ENCODE measurements at regions of chr2 and their contacts with region 1.

Region 1: GRCh38 chr2:25151718-25152117 is 16.7 kb downstream of the POMC start:
- DNase-seq: no peak
- H3K4me3 ChIP-seq: no peak overlapping the region
- H3K27ac ChIP-seq: no peak overlapping the region
- H3K4me1 ChIP-seq: no peaks in the 10 kb centered on the region
- H3K27me3 ChIP-seq: no peaks in the 10 kb centered on the region
- CTCF ChIP-seq: no peak
- POLR2A ChIP-seq: no peak

Region 2: DNA sequence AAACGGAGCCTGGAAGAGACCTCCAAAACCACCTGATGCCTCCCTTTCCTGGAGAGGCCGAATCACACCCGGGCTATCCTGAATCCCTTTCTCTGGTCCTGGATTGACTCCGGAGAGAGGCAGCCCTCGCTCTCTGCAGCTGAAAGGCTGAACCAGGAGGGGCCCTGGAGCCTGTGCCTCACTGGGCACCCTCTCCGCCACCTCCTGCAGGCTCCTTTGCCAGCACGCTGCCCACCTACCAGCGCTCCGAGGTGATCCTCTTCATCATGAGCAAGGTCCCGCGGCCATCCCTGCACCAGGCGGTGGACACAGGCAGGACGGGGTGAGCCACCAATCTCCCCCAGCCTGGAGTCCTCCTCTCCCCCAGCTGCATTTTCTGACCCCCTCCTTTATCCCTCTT is 19.0 kb before region 1 on chr2:
- intact Hi-C with region 1: loop called (anchors 1 kb)
- DNase-seq: no peak
- H3K4me3 ChIP-seq: peak overlapping the region in 2 of 3 donors; percentile 52 to 67
- H3K27ac ChIP-seq: peak overlapping the region; percentile 36 to 61
- H3K4me1 ChIP-seq: no peaks in the 10 kb centered on the region
- H3K27me3 ChIP-seq: peaks cover 0 to 5% of the 10 kb centered on the region in 2 donors
- CTCF ChIP-seq: no peak
- POLR2A ChIP-seq: no peak